ENCODE measurements at regions of chr14 and their contacts with region 1.

Region 1: DNA sequence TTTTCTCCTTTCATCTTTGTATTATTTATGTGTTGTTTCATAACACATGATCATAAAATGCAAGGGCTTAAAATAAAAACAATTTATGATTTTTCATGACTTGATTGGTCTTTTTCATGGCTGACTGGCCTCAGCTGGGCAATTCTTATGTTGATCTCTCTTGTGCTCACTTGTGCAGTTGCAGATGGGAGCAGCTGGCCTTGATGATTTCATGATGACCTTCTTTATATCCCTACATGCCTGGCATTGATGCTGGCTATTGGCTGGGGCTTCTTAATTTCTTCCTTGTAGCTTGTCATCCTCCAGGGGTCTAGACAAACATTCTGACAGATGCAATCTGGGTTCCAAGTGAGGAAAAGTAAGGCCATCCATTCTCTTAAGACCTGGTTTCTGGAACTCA is 1832.8 kb upstream of the FLRT2 start:
- DNase-seq: no peak
- H3K4me3 ChIP-seq: no peak overlapping the region
- H3K27ac ChIP-seq: no peak overlapping the region
- H3K4me1 ChIP-seq: no peaks in the 10 kb centered on the region
- H3K27me3 ChIP-seq: no peaks in the 10 kb centered on the region
- CTCF ChIP-seq: no peak

Region 2: GRCh38 chr14:84785996-84786395 is 1088.9 kb after region 1 on chr14:
- CTCF ChIA-PET with region 1: interaction called, 11 read pairs
- POLR2A ChIA-PET with region 1: no interaction called
- intact Hi-C with region 1: no loop called
- DNase-seq: no peak
- H3K4me3 ChIP-seq: no peak overlapping the region
- H3K27ac ChIP-seq: no peak overlapping the region
- H3K4me1 ChIP-seq: no peaks in the 10 kb centered on the region
- H3K27me3 ChIP-seq: no peaks in the 10 kb centered on the region
- CTCF ChIP-seq: no peak